ENCODE measurements at regions of chrX and their contacts with region 1.

Region 1: GRCh38 chrX:120790118-120790517 is 85.5 kb downstream of the CT47B1 start:
- DNase-seq: peak; percentile 71
- H3K4me3 ChIP-seq: no peak overlapping the region
- H3K27ac ChIP-seq: peak overlapping the region; percentile 41
- H3K4me1 ChIP-seq: peaks cover 36% of the 10 kb centered on the region
- H3K27me3 ChIP-seq: no peaks in the 10 kb centered on the region
- CTCF ChIP-seq: peak; percentile 39 to 44
- POLR2A ChIP-seq: no peak

Region 2: GRCh38 chrX:120250522-120251271 is 539.4 kb before region 1 on chrX and contains the start of gene ZBTB33:
- CTCF ChIA-PET with region 1: no interaction called
- POLR2A ChIA-PET with region 1: no interaction called
- dilution Hi-C with region 1: no loop called
- intact Hi-C with region 1: loop called (anchors 10 kb)
- DNase-seq: peak; percentile 96
- H3K4me3 ChIP-seq: peak within 1 kb of the TSS; percentile 53 to 88 (median 82)
- H3K27ac ChIP-seq: peak within 1 kb of the TSS; percentile 70
- H3K4me1 ChIP-seq: peaks cover 11% of the 10 kb centered on the region
- H3K27me3 ChIP-seq: peaks cover 3 to 11% of the 10 kb centered on the region in 2 experiments
- CTCF ChIP-seq: peak; percentile 51 to 74
- POLR2A ChIP-seq: no peak
- total RNA-seq, gene ZBTB33: 16.3 and 16.6 TPM in 2 replicates

Region 3: DNA sequence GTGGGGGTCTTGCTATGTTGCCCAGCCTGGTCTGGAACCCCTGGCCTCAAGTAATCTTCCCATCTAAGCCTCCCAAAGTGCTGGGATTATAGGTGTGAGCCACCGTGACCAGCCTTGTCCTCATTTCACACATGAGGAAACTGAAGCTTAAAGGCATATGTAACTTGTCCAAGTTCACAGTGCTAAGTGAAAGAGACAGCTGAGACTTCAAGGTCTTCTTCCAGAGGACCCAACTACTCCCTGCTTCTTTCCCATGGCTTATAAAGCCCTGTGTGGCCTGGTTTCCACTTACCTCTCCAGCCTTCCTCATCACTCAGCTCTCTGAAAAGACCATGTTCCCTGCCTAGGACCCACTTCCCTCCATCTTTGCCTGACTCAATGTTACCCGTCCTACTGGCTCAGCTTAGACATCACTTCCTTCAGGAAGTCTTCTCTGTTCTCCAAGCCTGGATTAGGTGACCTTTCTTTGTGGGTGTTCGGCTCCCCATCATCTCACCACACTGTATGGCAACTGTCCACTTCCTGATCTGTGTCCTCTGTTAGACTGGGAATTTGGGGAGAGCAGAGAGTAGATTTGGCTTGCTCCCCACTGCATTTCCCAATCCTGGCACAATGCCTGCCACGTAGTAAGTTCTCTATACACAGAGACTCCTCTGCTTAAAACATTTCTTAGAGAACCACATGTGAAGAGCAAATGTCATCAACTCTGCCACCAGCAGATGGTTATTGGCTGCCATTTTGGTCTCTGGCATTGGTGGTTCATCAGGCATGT is 290.6 kb before region 1 on chrX:
- CTCF ChIA-PET with region 1: interaction called, 3 read pairs
- POLR2A ChIA-PET with region 1: no interaction called
- dilution Hi-C with region 1: no loop called
- intact Hi-C with region 1: loop called (anchors 5 kb)
- DNase-seq: no peak
- H3K4me3 ChIP-seq: no peak overlapping the region
- H3K27ac ChIP-seq: no peak overlapping the region
- H3K4me1 ChIP-seq: peaks cover 3% of the 10 kb centered on the region
- H3K27me3 ChIP-seq: no peaks in the 10 kb centered on the region
- CTCF ChIP-seq: no peak
- POLR2A ChIP-seq: no peak

Region 4: GRCh38 chrX:120839491-120839890 is 49.4 kb after region 1 on chrX:
- CTCF ChIA-PET with region 1: interaction called, 10 read pairs
- POLR2A ChIA-PET with region 1: no interaction called
- dilution Hi-C with region 1: no loop called
- intact Hi-C with region 1: loop called (anchors 2 kb)
- DNase-seq: peak; percentile 58
- H3K4me3 ChIP-seq: no peak overlapping the region
- H3K27ac ChIP-seq: peak overlapping the region; percentile 11
- H3K4me1 ChIP-seq: peaks cover 11% of the 10 kb centered on the region
- H3K27me3 ChIP-seq: no peaks in the 10 kb centered on the region
- CTCF ChIP-seq: no peak
- POLR2A ChIP-seq: no peak

Region 5: GRCh38 chrX:120857240-120857639 is 67.1 kb after region 1 on chrX:
- CTCF ChIA-PET with region 1: interaction called, 16 read pairs
- POLR2A ChIA-PET with region 1: no interaction called
- dilution Hi-C with region 1: no loop called
- intact Hi-C with region 1: loop called (anchors 1 kb)
- DNase-seq: no peak
- H3K4me3 ChIP-seq: no peak overlapping the region
- H3K27ac ChIP-seq: no peak overlapping the region
- H3K4me1 ChIP-seq: no peaks in the 10 kb centered on the region
- H3K27me3 ChIP-seq: no peaks in the 10 kb centered on the region
- CTCF ChIP-seq: peak; percentile 7 to 13
- POLR2A ChIP-seq: no peak

Region 6: GRCh38 chrX:121579016-121579760 is 789.1 kb after region 1 on chrX:
- CTCF ChIA-PET with region 1: no interaction called
- POLR2A ChIA-PET with region 1: no interaction called
- dilution Hi-C with region 1: no loop called
- intact Hi-C with region 1: loop called (anchors 1 kb)
- DNase-seq: peak; percentile 1
- H3K4me3 ChIP-seq: no peak overlapping the region
- H3K27ac ChIP-seq: no peak overlapping the region
- H3K4me1 ChIP-seq: no peaks in the 10 kb centered on the region
- H3K27me3 ChIP-seq: no peaks in the 10 kb centered on the region
- CTCF ChIP-seq: no peak
- POLR2A ChIP-seq: no peak

Measured in endothelial cell of umbilical vein (primary cell).